Panc1 (cell line): ENCODE measurements at regions of chr6 and their contacts with region 1.

Region 1: DNA sequence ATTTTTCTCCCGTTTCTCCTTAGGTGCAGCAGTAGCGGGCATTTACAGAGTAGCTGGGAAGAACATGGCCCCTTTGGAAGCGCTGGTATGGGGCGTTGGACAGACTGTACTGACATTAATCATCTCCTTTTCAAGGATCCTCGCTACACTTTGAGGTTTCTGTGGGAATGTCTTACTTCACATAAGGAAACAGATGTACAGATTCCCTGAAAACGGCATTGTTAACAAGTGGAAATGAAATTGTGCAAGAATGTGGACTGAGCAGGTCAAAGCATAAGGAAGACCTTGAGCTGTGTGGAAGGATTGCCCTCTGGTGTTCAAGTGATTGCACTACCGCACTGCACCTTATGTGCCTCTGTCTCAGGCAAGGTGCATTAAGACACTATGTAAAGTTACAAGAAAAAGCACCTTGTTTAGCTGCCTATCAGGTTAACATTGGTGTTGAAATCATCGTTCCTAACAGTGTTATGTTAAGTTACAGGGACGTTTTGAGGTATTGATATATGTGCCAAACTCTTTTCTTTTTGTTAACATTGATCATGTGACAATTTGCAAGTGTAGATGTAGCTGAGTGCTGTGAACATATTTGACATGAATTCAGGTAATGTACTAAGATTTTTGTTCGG is 38.0 kb downstream of the TMEM170B start:
- DNase-seq: peak; percentile 82
- ATAC-seq: peak; percentile 100
- H3K4me3 ChIP-seq: 0 out of 4 replicates have a peak overlapping the region, but pooled peaks of 1 of the 2 experiments have one; percentile 0
- H3K27ac ChIP-seq: no peak overlapping the region
- H3K4me1 ChIP-seq: no peaks in the 10 kb centered on the region
- H3K27me3 ChIP-seq: no peaks in the 10 kb centered on the region
- CTCF ChIP-seq: peak; percentile 94

Region 2: GRCh38 chr6:11144393-11144851 is 431.1 kb before region 1 on chr6:
- CTCF ChIA-PET with region 1: interaction called, 6 read pairs
- POLR2A ChIA-PET with region 1: no interaction called
- in situ Hi-C with region 1: no loop called
- intact Hi-C with region 1: loop called (anchors 5 kb)
- DNase-seq: peak; percentile 54
- ATAC-seq: peak; percentile 92
- H3K4me3 ChIP-seq: no peak overlapping the region
- H3K27ac ChIP-seq: no peak overlapping the region
- H3K4me1 ChIP-seq: 0 out of 2 replicates have a peak, but pooled peaks cover 3% of the 10 kb centered on the region
- H3K27me3 ChIP-seq: no peaks in the 10 kb centered on the region
- CTCF ChIP-seq: peak; percentile 91

Region 3: GRCh38 chr6:11552442-11552841 is 23.1 kb before region 1 on chr6:
- CTCF ChIA-PET with region 1: no interaction called
- POLR2A ChIA-PET with region 1: no interaction called
- in situ Hi-C with region 1: no loop called
- intact Hi-C with region 1: no loop called
- DNase-seq: no peak
- ATAC-seq: no peak
- H3K4me3 ChIP-seq: no peak overlapping the region
- H3K27ac ChIP-seq: no peak overlapping the region
- H3K4me1 ChIP-seq: no peaks in the 10 kb centered on the region
- H3K27me3 ChIP-seq: peaks cover 4% of the 10 kb centered on the region; the same call in 1 of the 2 replicates
- CTCF ChIP-seq: no peak